Thyroid gland (tissue), 4 donors: ENCODE measurements at regions of chr1 and their contacts with region 1.

Region 1: DNA sequence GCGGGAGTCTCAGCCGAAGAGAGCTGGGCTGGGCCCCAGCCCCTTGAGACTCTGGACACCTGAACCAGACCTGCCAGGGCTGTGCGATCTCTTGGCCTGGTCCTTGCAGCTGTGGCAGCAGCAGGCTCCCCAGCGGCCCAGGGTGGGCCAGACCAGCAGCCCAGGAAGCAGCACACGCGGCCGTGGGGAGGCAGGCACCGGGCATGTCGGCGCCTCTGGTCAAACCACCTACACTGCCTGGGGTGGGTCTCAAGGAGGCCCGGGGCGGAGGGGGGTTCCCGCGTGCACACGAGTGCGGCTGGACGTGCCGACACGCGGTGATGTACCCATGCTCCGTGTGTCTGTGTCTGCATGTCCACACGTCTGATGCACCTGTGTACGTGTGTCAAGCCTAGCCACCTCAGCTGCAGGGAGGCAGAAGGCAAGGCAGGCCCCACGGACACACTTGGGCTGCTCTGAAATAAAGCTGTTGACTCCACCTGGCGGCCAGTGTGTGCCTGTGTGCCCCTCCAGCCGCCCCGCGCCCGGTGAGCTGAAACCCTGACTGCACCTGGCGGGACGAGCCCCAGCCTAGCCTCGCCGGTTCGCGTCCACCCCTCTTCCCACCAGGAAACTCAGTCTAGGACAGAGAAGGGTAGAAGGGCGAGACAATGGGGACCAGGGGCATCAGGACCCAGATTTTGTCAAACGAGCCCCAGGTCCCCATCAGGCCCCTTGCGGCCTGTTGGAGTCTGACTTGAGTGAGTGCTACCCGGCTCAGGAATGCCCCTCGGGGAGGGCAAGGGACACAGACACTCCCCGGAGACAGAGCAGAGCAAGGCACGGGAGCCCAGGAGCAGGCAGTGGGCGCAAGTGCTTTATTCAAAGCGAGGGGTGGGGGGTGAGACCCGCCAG is 11.6 kb downstream of the SCNN1D start:
- DNase-seq: peak; percentile 86 to 89
- H3K4me3 ChIP-seq: no peak overlapping the region
- H3K27ac ChIP-seq: no peak overlapping the region
- H3K4me1 ChIP-seq: peaks cover 6 to 9% of the 10 kb centered on the region in 2 donors
- H3K27me3 ChIP-seq: no peaks in the 10 kb centered on the region
- CTCF ChIP-seq: peak; percentile 35 to 88 (median 73)
- POLR2A ChIP-seq: no peak

Region 2: DNA sequence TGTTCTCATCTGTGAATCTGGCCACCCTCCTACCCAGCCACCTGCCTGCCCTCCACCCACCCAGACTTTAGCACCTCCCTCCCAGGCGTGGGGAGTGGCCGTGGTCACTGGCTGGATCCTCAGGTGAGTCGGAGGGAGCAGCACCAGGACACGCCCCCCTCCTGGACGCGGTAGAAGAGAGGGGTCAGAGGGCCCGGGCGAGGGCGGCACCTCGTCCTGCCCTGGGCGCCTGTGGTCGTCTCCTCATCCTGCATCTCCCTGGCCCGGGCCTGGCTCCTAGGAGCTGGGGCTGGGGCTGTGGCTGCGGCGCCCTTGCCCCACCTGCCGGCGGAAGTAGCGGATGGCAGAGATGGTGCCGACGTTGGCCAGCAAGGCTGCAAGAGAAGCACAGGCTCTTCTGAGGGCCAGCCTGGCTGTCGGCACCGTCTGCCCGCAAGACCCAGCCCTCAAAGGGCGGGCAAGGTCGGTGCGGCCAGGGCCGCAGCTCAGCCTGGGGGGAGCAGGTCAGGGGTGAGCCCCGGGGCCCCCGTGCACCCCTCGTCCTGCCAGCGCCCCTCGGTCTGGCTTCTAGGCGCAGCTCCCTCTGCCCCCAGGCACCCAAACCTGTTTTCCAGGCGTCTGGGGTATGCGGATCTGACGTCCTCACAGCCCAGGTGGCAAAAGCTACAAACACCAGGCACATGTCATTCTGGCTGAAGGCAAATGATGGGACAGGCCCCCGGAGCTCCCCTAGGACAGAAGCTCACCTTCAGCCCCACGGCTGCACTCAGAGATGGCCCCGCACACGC is 315.7 kb before region 1 on chr1:
- intact Hi-C with region 1: loop called (anchors 10 kb)
- DNase-seq: peak; percentile 71 to 73
- H3K4me3 ChIP-seq: no peak overlapping the region
- H3K27ac ChIP-seq: no peak overlapping the region
- H3K4me1 ChIP-seq: peaks cover 5 to 20% of the 10 kb centered on the region in 2 donors
- H3K27me3 ChIP-seq: peaks cover 4% of the 10 kb centered on the region
- CTCF ChIP-seq: peak in 5 of 6 experiments; percentile 32 to 74 (median 54)
- POLR2A ChIP-seq: no peak

Region 3: DNA sequence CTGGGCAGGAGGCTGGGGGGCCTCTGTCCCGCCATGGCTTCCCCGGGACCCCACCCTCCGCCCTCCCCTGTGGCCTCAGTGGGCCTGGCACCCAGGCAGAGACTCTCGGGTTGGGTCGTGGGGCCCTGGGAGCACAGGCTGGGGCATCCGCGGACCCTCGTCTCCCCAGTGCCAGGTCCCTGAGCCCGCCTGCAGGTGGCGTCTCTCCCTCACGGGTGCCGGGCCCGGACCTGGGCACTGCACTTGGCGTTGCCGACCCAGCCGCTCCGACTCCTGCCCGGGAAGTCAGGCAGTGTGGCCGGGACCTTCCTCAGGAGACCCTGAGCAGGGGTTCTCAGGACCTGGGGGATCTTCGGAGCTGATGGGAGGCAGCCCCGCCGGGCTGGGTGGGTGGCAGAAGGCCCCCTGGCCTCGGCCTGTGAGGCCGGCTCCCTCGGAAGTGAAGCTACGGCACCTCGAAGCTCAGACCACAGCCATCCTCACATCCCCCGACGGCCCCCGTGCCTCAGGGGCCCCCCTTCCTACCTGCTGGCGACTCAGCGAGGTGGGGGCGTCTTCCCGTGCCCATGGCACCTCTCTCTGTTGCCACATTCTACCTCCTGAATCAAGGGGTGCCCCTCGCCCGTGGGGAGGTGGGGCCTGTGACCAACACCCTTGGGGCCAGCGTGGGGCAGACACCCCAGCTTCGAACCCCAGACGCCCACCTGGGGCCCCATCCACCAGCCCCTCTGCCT is 169.6 kb before region 1 on chr1:
- intact Hi-C with region 1: loop called (anchors 2 kb)
- DNase-seq: peak; percentile 78 to 81
- H3K4me3 ChIP-seq: no peak overlapping the region
- H3K27ac ChIP-seq: no peak overlapping the region
- H3K4me1 ChIP-seq: peaks cover 0 to 8% of the 10 kb centered on the region in 2 donors
- H3K27me3 ChIP-seq: no peaks in the 10 kb centered on the region
- CTCF ChIP-seq: peak; percentile 71 to 93 (median 86)
- POLR2A ChIP-seq: no peak